ENCODE measurements at regions of chr7 and their contacts with region 1.

Region 1: DNA sequence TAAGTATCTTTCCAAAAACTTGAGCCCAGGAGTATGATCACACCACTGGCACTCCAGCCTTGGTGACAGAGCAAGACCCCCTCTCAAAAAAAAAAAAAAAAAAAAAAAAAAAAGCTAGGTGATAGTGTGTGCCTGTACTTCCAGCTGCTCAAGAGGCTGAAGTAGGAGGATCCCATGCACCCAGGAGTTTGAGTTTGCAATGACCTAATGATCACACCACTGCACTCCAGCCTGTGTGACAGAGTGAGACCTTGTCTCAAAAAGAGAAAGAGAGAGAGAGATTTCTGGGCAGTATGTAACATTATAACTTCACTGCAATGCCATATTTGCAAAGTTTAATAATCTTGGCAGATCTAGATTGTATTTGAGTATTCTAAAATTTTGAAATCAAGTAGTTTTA is 47.6 kb downstream of the AKAP9 start:
- DNase-seq: no peak
- ATAC-seq: no peak
- H3K4me3 ChIP-seq: no peak overlapping the region
- H3K4me3 Mint-ChIP-seq: no peak overlapping the region
- H3K27ac ChIP-seq: no peak overlapping the region
- H3K27ac Mint-ChIP-seq: no peak overlapping the region
- H3K4me1 ChIP-seq: no peaks in the 10 kb centered on the region
- H3K4me1 Mint-ChIP-seq: peaks cover 23 to 27% (median 23%) of the 10 kb centered on the region in 3 donors
- H3K27me3 ChIP-seq: no peaks in the 10 kb centered on the region
- H3K27me3 Mint-ChIP-seq: no peaks in the 10 kb centered on the region

Region 2: GRCh38 chr7:91759215-91759871 is 228.9 kb before region 1 on chr7:
- CTCF ChIA-PET with region 1: no interaction called
- POLR2A ChIA-PET with region 1: no interaction called
- DNase-seq: no peak
- ATAC-seq: no peak
- H3K4me3 ChIP-seq: no peak overlapping the region
- H3K4me3 Mint-ChIP-seq: no peak overlapping the region
- H3K27ac ChIP-seq: no peak overlapping the region
- H3K27ac Mint-ChIP-seq: no peak overlapping the region
- H3K4me1 ChIP-seq: no peaks in the 10 kb centered on the region
- H3K4me1 Mint-ChIP-seq: no peaks in the 10 kb centered on the region
- H3K27me3 ChIP-seq: no peaks in the 10 kb centered on the region
- H3K27me3 Mint-ChIP-seq: peaks cover 0 to 3% of the 10 kb centered on the region in 2 donors

Region 3: GRCh38 chr7:92095380-92095779 is 107.2 kb after region 1 on chr7:
- CTCF ChIA-PET with region 1: no interaction called
- POLR2A ChIA-PET with region 1: interaction called in 1 of 2 experiments, 12 read pairs
- DNase-seq: no peak
- ATAC-seq: no peak
- H3K4me3 ChIP-seq: no peak overlapping the region
- H3K4me3 Mint-ChIP-seq: no peak overlapping the region
- H3K27ac ChIP-seq: no peak overlapping the region
- H3K27ac Mint-ChIP-seq: peak overlapping the region in 1 of 2 donors; percentile 48
- H3K4me1 ChIP-seq: no peaks in the 10 kb centered on the region
- H3K4me1 Mint-ChIP-seq: no peaks in the 10 kb centered on the region
- H3K27me3 ChIP-seq: no peaks in the 10 kb centered on the region
- H3K27me3 Mint-ChIP-seq: no peaks in the 10 kb centered on the region